Activated CD8-positive, alpha-beta T cell treated with anti-CD3 and anti-CD28 coated beads for 36 hours (primary cell): ENCODE measurements at regions of chr12 and their contacts with region 1.

Region 1: GRCh38 chr12:26832822-26833742 is at the start of gene ITPR2:
- DNase-seq: peak; percentile 96
- ATAC-seq: peak; percentile 94
- H3K4me3 Mint-ChIP-seq: peak within 1 kb of the TSS; percentile 95
- H3K27ac Mint-ChIP-seq: peak within 1 kb of the TSS; percentile 98
- H3K4me1 Mint-ChIP-seq: peaks cover 38% of the 10 kb centered on the region
- H3K27me3 Mint-ChIP-seq: no peaks in the 10 kb centered on the region
- CTCF ChIP-seq: peak; percentile 34
- total RNA-seq, gene ITPR2: 38.9 to 41.2 TPM

Region 2: DNA sequence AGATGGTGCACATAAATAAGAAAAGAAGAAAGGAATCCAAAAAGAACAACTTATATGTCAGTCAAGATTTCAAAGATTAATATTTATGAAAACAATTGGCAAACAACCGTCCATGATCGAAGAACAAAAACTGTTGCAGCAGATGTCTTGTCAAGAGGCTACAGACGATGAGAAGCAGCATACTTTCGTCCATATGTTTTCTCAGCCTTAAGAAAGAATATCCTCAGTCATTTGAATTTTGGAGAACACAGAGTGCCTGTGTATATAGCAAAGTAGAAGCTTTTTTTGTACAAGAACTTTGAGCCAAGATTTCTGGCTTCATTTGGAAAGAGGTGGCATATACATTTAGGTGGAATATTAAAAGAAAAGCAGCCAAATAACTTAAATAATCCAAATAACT is 297.3 kb before region 1 on chr12:
- CTCF ChIA-PET with region 1: no interaction called
- POLR2A ChIA-PET with region 1: no interaction called
- intact Hi-C with region 1: no loop called
- DNase-seq: no peak
- ATAC-seq: no peak
- H3K4me3 Mint-ChIP-seq: no peak overlapping the region
- H3K27ac Mint-ChIP-seq: no peak overlapping the region
- H3K4me1 Mint-ChIP-seq: no peaks in the 10 kb centered on the region
- H3K27me3 Mint-ChIP-seq: no peaks in the 10 kb centered on the region
- CTCF ChIP-seq: no peak

Region 3: GRCh38 chr12:26748741-26749431 is 84.2 kb before region 1 on chr12:
- CTCF ChIA-PET with region 1: interaction called, 4 read pairs
- POLR2A ChIA-PET with region 1: interaction called, 4 read pairs
- intact Hi-C with region 1: loop called (anchors 5 kb)
- DNase-seq: no peak
- ATAC-seq: peak; percentile 70
- H3K4me3 Mint-ChIP-seq: peak overlapping the region; percentile 51
- H3K27ac Mint-ChIP-seq: peak overlapping the region; percentile 93
- H3K4me1 Mint-ChIP-seq: peaks cover 79% of the 10 kb centered on the region
- H3K27me3 Mint-ChIP-seq: no peaks in the 10 kb centered on the region
- CTCF ChIP-seq: no peak

Region 4: GRCh38 chr12:26810330-26810729 is 22.8 kb before region 1 on chr12:
- CTCF ChIA-PET with region 1: interaction called, 13 read pairs
- POLR2A ChIA-PET with region 1: interaction called, 8 read pairs
- intact Hi-C with region 1: no loop called
- DNase-seq: no peak
- ATAC-seq: no peak
- H3K4me3 Mint-ChIP-seq: no peak overlapping the region
- H3K27ac Mint-ChIP-seq: no peak overlapping the region
- H3K4me1 Mint-ChIP-seq: peaks cover 42% of the 10 kb centered on the region
- H3K27me3 Mint-ChIP-seq: no peaks in the 10 kb centered on the region
- CTCF ChIP-seq: no peak

Region 5: DNA sequence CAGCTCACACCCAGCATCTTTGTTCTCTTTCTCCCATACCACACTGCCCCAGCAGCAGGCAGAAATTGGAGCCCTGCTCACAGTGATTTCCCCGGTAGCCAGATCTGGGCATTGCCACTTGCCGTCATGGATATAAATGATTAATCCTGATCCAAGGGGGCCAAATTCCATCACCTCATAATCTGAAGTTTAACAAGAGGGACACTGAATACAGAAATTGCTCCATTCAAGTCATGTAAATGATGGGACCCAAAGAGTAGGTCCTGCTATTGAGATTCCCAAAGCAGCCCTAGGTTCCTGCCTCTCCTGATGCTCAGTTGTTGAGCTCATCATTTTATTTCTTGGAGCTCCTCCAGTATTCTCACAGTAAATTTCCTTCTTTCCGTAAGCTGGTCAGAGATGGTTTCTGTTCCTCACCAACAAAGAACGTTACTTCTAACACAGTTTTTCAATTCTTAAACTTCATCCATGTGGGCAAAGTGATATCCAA is 11.8 kb before region 1 on chr12:
- CTCF ChIA-PET with region 1: interaction called, 13 read pairs
- POLR2A ChIA-PET with region 1: interaction called, 5 read pairs
- intact Hi-C with region 1: no loop called
- DNase-seq: no peak
- ATAC-seq: no peak
- H3K4me3 Mint-ChIP-seq: no peak overlapping the region
- H3K27ac Mint-ChIP-seq: no peak overlapping the region
- H3K4me1 Mint-ChIP-seq: peaks cover 30% of the 10 kb centered on the region
- H3K27me3 Mint-ChIP-seq: no peaks in the 10 kb centered on the region
- CTCF ChIP-seq: no peak

Region 6: GRCh38 chr12:26845057-26845666 is 12.1 kb after region 1 on chr12:
- CTCF ChIA-PET with region 1: interaction called, 25 read pairs
- POLR2A ChIA-PET with region 1: interaction called, 6 read pairs
- intact Hi-C with region 1: no loop called
- DNase-seq: peak; percentile 26
- ATAC-seq: no peak
- H3K4me3 Mint-ChIP-seq: no peak overlapping the region
- H3K27ac Mint-ChIP-seq: no peak overlapping the region
- H3K4me1 Mint-ChIP-seq: peaks cover 11% of the 10 kb centered on the region
- H3K27me3 Mint-ChIP-seq: peaks cover 7% of the 10 kb centered on the region
- CTCF ChIP-seq: peak; percentile 64